Spleen (tissue), 13 donors: ENCODE measurements at regions of chr4 and their contacts with region 1.

Region 1: DNA sequence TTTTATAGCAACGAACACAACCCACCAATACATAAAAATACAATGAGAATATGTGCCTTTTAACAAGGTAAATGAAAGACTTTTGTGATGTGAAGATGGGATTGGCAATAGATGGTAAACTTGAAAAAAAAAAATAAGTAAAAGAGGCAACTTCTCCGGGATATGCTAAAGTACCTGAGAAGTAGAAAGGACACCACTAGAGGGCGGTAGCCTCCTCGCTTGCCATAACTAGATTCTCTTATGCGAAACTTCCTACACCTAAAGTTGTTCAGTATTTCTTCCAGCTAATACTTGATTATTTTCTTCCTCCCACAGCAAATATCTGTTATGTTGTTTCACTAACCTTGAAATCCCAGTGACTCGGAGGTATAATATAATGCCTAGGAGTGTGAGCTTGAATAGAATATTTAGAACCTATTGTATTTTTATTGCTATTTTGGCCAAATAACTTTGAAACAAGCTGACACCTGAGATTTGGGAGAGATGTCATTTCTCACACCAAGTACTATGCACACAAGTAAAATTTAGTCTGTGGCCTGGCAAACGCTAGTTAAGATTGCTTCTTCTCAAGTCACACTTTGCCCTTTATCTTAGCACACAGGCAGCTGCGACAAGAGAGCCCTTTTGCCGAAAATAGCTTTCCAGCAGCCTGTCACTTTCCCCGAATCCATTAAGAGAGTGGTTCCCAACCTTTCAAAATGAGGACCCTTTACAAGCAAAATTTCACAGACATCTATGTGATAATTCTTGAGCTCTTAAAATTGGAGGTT is 44.9 kb upstream of the PDLIM5 start:
- DNase-seq: no peak
- H3K4me3 ChIP-seq: no peak overlapping the region
- H3K27ac ChIP-seq: no peak overlapping the region
- H3K4me1 ChIP-seq: peaks cover 0 to 9% (median 2%) of the 10 kb centered on the region in 6 donors
- H3K27me3 ChIP-seq: peaks cover 0 to 7% (median 0%) of the 10 kb centered on the region in 7 donors
- CTCF ChIP-seq: peak; percentile 35 to 85 (median 72)
- POLR2A ChIP-seq: no peak

Region 2: GRCh38 chr4:94595879-94596483 is 189.1 kb after region 1 on chr4:
- intact Hi-C with region 1: loop called (anchors 5 kb)
- DNase-seq: no peak
- H3K4me3 ChIP-seq: no peak overlapping the region
- H3K27ac ChIP-seq: no peak overlapping the region
- H3K4me1 ChIP-seq: peaks cover 0 to 9% (median 3%) of the 10 kb centered on the region in 6 donors
- H3K27me3 ChIP-seq: no peaks in the 10 kb centered on the region
- CTCF ChIP-seq: peak in 10 of 11 experiments; percentile 34 to 75 (median 62)
- POLR2A ChIP-seq: no peak